Endothelial cell of umbilical vein (primary cell): ENCODE measurements at regions of chr9 and their contacts with region 1.

Region 1: GRCh38 chr9:4137234-4137633 is 162.6 kb downstream of the GLIS3 start:
- DNase-seq: peak; percentile 88
- H3K4me3 ChIP-seq: no peak overlapping the region
- H3K27ac ChIP-seq: peak overlapping the region; percentile 55
- H3K4me1 ChIP-seq: peaks cover 22% of the 10 kb centered on the region
- H3K27me3 ChIP-seq: no peaks in the 10 kb centered on the region
- CTCF ChIP-seq: no peak
- POLR2A ChIP-seq: no peak

Region 2: DNA sequence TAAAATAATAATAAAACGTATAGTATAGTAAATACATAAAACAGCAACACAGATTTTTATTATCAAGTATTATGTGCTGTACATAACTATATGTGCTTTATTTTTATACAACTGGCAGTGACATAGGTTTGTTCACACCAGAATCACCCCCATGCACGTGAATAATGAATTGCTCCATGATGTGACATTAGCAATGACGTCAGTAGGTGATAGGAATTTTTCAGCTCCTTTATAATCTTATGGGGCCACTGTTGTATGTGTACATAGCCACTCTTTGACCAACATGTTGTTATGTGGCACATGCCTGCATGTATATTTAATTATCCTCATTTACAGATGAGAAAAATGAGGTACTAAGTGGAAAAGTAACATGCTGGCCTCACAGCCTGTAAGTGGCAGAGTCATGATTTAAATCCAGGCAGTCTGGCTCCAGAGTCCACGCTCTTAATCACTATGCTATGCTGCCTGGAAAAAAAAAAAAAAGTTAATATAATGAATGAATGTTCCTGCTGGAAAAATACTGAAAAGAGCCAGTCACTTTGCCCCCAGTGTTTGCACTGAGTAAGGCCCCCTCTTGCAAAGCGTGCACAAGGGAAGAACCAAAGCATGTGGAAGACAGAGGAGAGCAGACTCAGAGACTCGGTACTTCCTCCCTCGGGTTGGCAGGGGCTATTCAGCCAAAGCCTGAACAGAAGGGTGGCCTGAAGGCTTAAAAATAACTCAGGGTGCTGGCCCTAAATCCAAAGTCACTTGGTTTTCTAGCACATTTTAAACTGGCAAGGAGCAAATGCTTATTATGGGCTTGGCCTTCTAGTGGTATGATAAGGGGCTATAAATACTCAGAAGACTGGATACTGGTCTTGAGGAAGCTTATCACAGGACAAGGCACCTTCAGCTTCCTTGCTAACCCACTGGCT is 44.2 kb before region 1 on chr9:
- CTCF ChIA-PET with region 1: no interaction called
- POLR2A ChIA-PET with region 1: no interaction called
- dilution Hi-C with region 1: no loop called
- intact Hi-C with region 1: no loop called
- DNase-seq: no peak
- H3K4me3 ChIP-seq: no peak overlapping the region
- H3K27ac ChIP-seq: no peak overlapping the region
- H3K4me1 ChIP-seq: no peaks in the 10 kb centered on the region
- H3K27me3 ChIP-seq: no peaks in the 10 kb centered on the region
- CTCF ChIP-seq: no peak
- POLR2A ChIP-seq: no peak

Region 3: DNA sequence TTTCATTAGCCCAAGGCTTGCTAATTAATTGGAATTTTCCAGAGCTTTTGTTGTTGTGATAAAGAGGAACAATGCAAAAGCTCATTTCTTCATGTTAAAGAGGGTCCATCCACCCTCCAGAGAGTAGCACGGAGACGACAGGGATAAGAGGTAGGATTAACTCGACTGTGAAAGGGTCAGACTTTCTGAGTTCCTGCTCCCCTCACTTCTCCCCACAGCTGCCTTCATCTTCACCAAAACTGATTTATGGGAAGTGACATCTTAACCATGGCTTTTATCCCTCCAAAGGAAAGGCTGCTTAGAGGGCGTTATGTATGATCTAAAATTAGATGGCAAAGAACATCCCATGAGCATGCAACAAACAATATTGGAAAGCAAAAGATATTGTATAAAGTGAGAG is 27.1 kb after region 1 on chr9:
- CTCF ChIA-PET with region 1: no interaction called
- POLR2A ChIA-PET with region 1: no interaction called
- dilution Hi-C with region 1: no loop called
- intact Hi-C with region 1: no loop called
- DNase-seq: no peak
- H3K4me3 ChIP-seq: no peak overlapping the region
- H3K27ac ChIP-seq: no peak overlapping the region
- H3K4me1 ChIP-seq: no peaks in the 10 kb centered on the region
- H3K27me3 ChIP-seq: peaks cover 2% of the 10 kb centered on the region in 2 experiments
- CTCF ChIP-seq: no peak
- POLR2A ChIP-seq: no peak

Region 4: GRCh38 chr9:4262735-4263141 is 125.5 kb after region 1 on chr9:
- CTCF ChIA-PET with region 1: no interaction called
- POLR2A ChIA-PET with region 1: no interaction called
- dilution Hi-C with region 1: no loop called
- intact Hi-C with region 1: loop called (anchors 1 kb)
- DNase-seq: peak; percentile 74
- H3K4me3 ChIP-seq: no peak overlapping the region
- H3K27ac ChIP-seq: peak overlapping the region; percentile 82
- H3K4me1 ChIP-seq: peaks cover 12% of the 10 kb centered on the region
- H3K27me3 ChIP-seq: no peaks in the 10 kb centered on the region
- CTCF ChIP-seq: no peak
- POLR2A ChIP-seq: no peak

Region 5: DNA sequence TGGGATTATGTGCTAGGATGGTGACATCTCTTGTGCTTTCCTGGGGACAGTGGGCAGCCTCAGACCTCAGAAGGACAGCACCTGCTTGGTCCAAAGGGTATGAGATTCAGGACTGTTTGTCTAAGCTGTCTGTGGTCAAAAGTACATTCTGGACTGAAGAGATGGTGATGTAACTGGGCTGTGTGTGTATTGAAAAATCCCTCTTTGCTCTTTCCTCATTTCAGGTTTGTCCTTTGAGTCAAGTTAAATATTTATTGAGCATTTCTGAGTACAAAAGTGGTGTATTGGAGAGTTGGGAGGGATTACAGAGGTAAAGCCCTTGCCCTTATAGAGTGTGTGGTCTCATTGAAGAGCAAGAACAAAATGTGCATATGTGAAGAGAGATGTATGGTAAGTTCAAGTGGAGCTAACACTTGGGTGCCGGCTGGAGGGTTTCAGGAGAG is 702.3 kb after region 1 on chr9:
- CTCF ChIA-PET with region 1: no interaction called
- POLR2A ChIA-PET with region 1: no interaction called
- dilution Hi-C with region 1: no loop called
- intact Hi-C with region 1: no loop called
- DNase-seq: no peak
- H3K4me3 ChIP-seq: no peak overlapping the region
- H3K27ac ChIP-seq: no peak overlapping the region
- H3K4me1 ChIP-seq: peaks cover 6% of the 10 kb centered on the region
- H3K27me3 ChIP-seq: no peaks in the 10 kb centered on the region
- CTCF ChIP-seq: no peak
- POLR2A ChIP-seq: no peak